Activated CD4-positive, alpha-beta memory T cell treated with anti-CD3 and anti-CD28 coated beads for 36 hours (primary cell): ENCODE measurements at regions of chr12 and their contacts with region 1.

Region 1: DNA sequence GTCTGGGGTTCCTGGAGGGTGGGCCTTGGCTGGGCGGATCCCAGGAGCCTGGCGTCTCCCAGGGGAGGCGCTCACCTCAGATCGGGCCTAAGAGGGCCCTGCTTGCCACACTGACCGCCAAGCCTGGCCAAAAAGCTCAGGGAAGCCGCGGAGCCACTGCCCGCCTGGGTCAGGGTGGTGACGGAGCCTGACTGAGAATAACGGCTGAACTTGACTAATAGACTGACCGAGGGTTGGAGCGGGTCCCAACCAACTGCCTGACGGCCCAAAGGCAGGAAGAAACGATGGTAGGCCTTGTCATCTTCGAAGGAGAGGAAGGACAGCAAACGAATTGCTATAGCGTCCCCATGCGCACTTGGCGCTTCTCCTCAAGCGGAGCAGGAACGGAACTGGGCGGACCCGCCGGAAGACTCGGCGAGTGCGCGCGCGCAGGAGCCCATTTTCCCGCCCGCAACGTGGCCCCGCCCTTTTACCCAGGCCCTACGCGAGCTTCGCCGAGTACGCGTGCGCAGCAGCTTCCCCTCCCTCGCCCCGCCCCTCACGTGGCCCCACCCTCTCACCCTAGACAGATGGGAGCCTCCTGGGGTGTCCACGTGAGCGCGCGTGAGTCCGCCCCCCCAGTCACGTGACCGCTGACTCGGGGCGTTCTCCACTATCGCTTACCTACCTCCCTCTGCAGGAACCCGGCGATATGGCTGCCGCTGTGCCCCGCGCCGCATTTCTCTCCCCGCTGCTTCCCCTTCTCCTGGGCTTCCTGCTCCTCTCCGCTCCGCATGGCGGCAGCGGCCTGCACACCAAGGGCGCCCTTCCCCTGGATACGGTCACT is at the starts of genes ERP29 and TMEM116:
- DNase-seq: peak; percentile 100
- H3K4me3 Mint-ChIP-seq: peak within 1 kb of the TSS; percentile 97
- H3K27ac Mint-ChIP-seq: peak within 1 kb of the TSS; percentile 99
- H3K4me1 Mint-ChIP-seq: peaks cover 49% of the 10 kb centered on the region
- H3K27me3 Mint-ChIP-seq: no peaks in the 10 kb centered on the region
- total RNA-seq, gene ERP29: 102 to 104 TPM
- total RNA-seq, gene TMEM116: 14.0 to 17.1 TPM

Region 2: GRCh38 chr12:111841750-111842555 is 171.0 kb before region 1 on chr12 and contains the start of gene MAPKAPK5:
- CTCF ChIA-PET with region 1: no interaction called
- POLR2A ChIA-PET with region 1: interaction called, 10 read pairs
- intact Hi-C with region 1: loop called (anchors 5 kb)
- DNase-seq: peak; percentile 98
- H3K4me3 Mint-ChIP-seq: peak within 1 kb of the TSS; percentile 98
- H3K27ac Mint-ChIP-seq: peak within 1 kb of the TSS; percentile 95
- H3K4me1 Mint-ChIP-seq: peaks cover 56% of the 10 kb centered on the region
- H3K27me3 Mint-ChIP-seq: no peaks in the 10 kb centered on the region
- total RNA-seq, gene MAPKAPK5: 53.7 to 53.9 TPM

Region 3: GRCh38 chr12:111993292-111994150 is 19.5 kb before region 1 on chr12:
- CTCF ChIA-PET with region 1: interaction called, 4 read pairs
- POLR2A ChIA-PET with region 1: interaction called, 4 read pairs
- intact Hi-C with region 1: loop called (anchors 1 kb)
- DNase-seq: peak; percentile 44
- H3K4me3 Mint-ChIP-seq: peak overlapping the region; percentile 78
- H3K27ac Mint-ChIP-seq: peak overlapping the region; percentile 40
- H3K4me1 Mint-ChIP-seq: peaks cover 72% of the 10 kb centered on the region
- H3K27me3 Mint-ChIP-seq: no peaks in the 10 kb centered on the region

Region 4: DNA sequence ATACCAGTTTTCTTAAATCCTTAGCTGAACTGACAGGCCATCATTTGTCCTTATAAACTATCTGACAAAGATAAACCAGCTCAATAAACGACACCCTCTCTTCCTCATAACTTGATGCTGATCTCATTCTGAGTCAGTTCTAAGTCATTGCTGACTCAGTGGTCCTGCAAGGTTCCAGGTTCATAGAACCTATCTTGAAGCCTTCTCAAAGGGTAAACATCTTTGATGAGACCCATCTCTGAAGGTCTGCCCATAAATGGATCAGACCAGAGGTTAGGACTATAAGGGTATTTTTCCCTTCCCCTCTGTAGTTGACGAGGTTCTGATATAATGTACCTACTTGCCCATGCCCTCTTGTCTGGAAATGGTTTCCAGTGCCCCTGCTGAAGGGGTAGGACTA is 83.7 kb after region 1 on chr12:
- CTCF ChIA-PET with region 1: interaction called, 4 read pairs
- POLR2A ChIA-PET with region 1: interaction called, 3 read pairs
- intact Hi-C with region 1: loop called (anchors 1 kb)
- DNase-seq: peak; percentile 54
- H3K4me3 Mint-ChIP-seq: peak overlapping the region; percentile 42
- H3K27ac Mint-ChIP-seq: peak overlapping the region; percentile 96
- H3K4me1 Mint-ChIP-seq: peaks cover 47% of the 10 kb centered on the region
- H3K27me3 Mint-ChIP-seq: no peaks in the 10 kb centered on the region

Region 5: DNA sequence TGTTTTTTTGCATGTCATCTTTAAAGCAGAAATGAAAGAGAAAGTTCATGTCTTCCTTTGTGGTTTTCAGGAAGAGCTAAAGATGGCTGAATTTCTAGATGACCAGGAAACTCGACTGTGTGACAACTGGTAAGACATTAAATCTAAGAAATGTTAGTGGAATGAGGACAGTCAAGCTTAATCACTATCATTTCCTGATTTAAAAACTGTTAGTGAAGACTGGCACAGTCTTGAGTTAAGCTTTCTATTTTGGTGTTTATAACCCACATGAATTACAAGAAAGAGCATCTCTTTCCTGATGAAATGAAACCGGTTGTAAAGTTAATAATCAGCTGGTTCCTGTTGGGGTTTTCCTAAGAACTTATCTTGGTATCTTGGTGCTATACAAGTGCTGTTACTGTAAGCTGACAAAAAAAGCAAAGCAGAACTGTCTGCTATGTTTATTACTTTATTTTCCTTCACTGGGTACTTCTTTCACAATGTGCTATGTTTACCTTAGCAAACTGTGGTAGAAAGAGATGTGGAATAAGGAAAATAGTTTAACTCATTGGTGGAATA is 117.5 kb after region 1 on chr12:
- CTCF ChIA-PET with region 1: interaction called, 4 read pairs
- POLR2A ChIA-PET with region 1: interaction called, 17 read pairs
- intact Hi-C with region 1: loop called (anchors 1 kb)
- DNase-seq: no peak
- H3K4me3 Mint-ChIP-seq: peak overlapping the region; percentile 55
- H3K27ac Mint-ChIP-seq: peak overlapping the region; percentile 76
- H3K4me1 Mint-ChIP-seq: peaks cover 56% of the 10 kb centered on the region
- H3K27me3 Mint-ChIP-seq: no peaks in the 10 kb centered on the region

Region 6: GRCh38 chr12:112382232-112382796 is 369.3 kb after region 1 on chr12 and contains the start of gene HECTD4:
- CTCF ChIA-PET with region 1: no interaction called
- POLR2A ChIA-PET with region 1: no interaction called
- intact Hi-C with region 1: loop called (anchors 2 kb)
- DNase-seq: peak; percentile 95
- H3K4me3 Mint-ChIP-seq: peak within 1 kb of the TSS; percentile 91
- H3K27ac Mint-ChIP-seq: peak within 1 kb of the TSS; percentile 75
- H3K4me1 Mint-ChIP-seq: peaks cover 31% of the 10 kb centered on the region
- H3K27me3 Mint-ChIP-seq: no peaks in the 10 kb centered on the region
- total RNA-seq, gene HECTD4: 24.0 to 24.4 TPM